WTC11 (cell line): ENCODE measurements at regions of chr11 and their contacts with region 1.

Region 1: DNA sequence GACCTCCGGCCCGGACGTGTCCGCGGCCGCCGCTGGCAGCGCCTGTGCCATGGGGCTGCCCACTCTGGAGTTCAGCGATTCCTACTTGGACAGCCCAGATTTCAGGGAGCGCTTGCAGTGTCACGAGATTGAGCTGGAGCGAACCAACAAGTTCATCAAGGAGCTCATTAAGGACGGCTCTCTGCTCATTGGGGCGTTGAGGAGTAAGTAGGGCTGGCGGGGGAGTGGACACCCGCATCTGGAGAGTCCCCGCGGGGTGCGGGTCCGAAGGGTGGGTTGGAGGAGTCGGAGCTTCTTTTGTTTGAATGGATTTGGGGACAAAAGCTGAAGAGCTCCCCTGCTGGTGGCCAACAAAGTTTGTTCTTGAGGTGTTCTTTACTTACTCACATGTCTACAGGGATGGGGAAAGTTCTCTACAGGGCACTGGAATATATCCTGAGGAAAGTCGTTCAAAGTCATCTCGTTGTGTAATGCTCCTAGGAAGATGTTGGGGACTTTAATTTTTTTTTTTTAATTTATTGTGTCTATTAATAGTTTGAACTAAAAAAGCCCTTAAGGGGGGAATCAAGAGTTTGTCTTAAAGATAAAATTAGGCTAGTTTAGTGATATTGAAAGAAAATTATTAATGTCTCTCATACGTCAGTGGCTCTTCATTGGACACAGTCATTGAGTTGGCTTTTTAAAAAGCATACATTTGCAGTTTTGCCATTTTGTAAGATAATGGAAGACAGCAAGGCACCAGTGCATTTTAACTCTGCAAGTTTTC is 725 bp downstream of the ARHGAP42 start:
- DNase-seq: peak; percentile 72
- ATAC-seq: peak; percentile 58
- H3K4me3 Mint-ChIP-seq: peak overlapping the region; percentile 97
- H3K27ac Mint-ChIP-seq: peak overlapping the region; percentile 97
- H3K4me1 Mint-ChIP-seq: peaks cover 62% of the 10 kb centered on the region
- H3K27me3 Mint-ChIP-seq: no peaks in the 10 kb centered on the region
- CTCF ChIP-seq: peak; percentile 44

Region 2: DNA sequence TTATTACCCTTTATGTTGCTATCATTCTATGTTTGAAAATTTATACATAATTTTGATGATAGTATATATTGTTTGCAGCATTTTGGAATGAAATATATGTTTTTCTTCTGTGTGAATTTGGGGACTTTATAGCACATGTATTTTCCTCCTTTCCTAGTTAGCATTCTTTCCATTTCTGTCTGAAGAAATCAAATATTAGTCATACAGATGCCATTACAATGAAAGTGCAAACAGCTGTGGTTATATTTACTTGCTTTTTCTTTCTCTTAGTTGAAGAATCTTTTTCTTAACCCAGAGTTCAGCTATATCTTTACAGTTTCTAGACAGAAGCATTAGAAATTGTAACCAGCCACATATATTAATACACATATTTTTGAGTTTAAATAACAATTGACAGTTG is 753.8 kb before region 1 on chr11:
- CTCF ChIA-PET with region 1: no interaction called
- POLR2A ChIA-PET with region 1: no interaction called
- DNase-seq: no peak
- ATAC-seq: no peak
- H3K4me3 Mint-ChIP-seq: no peak overlapping the region
- H3K27ac Mint-ChIP-seq: no peak overlapping the region
- H3K4me1 Mint-ChIP-seq: no peaks in the 10 kb centered on the region
- H3K27me3 Mint-ChIP-seq: peaks cover 9% of the 10 kb centered on the region
- CTCF ChIP-seq: no peak

Region 3: GRCh38 chr11:100673063-100673462 is 14.8 kb before region 1 on chr11:
- CTCF ChIA-PET with region 1: no interaction called
- POLR2A ChIA-PET with region 1: no interaction called
- DNase-seq: no peak
- ATAC-seq: no peak
- H3K4me3 Mint-ChIP-seq: no peak overlapping the region
- H3K27ac Mint-ChIP-seq: no peak overlapping the region
- H3K4me1 Mint-ChIP-seq: peaks cover 23% of the 10 kb centered on the region
- H3K27me3 Mint-ChIP-seq: no peaks in the 10 kb centered on the region
- CTCF ChIP-seq: no peak

Region 4: DNA sequence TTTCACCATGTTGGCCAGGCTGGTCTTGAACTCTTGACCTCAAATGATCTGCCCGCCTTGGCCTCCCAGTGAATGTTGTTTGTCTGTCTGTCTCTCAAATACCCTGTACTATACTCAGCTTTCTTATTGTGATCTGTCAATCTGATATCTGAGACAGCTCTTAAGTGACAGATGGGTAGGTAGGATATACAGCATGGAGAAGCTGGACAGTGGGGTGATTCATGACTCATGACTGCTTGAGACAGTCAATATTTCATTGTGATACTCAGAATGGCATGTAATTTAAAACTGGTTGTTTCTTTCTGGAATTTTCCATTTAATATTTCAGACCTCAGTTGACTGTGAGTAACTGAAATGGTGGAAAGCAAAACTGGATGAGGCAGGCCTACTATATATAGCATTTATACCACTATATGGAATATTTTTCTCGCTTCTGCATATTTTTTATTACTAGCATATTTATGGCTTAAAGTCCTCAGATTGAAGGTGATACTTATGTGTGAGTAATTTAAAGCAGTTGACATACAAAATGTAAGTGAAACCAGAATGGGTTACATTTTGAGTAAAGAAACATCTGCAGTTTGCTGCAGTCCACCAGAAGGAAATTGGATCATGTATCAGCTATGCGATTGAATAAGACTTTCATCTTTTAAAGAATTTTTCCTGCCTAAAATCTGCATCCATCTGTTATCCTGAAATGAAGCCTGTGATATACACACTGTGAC is 21.6 kb after region 1 on chr11:
- CTCF ChIA-PET with region 1: interaction called, 27 read pairs
- POLR2A ChIA-PET with region 1: interaction called, 3 read pairs
- DNase-seq: no peak
- ATAC-seq: no peak
- H3K4me3 Mint-ChIP-seq: no peak overlapping the region
- H3K27ac Mint-ChIP-seq: peak overlapping the region; percentile 19; the same call in 1 of the 2 replicates
- H3K4me1 Mint-ChIP-seq: peaks cover 29% of the 10 kb centered on the region
- H3K27me3 Mint-ChIP-seq: no peaks in the 10 kb centered on the region
- CTCF ChIP-seq: no peak

Region 5: GRCh38 chr11:100719809-100720221 is 32.0 kb after region 1 on chr11:
- CTCF ChIA-PET with region 1: interaction called, 15 read pairs
- POLR2A ChIA-PET with region 1: interaction called, 5 read pairs
- DNase-seq: peak; percentile 32
- ATAC-seq: peak; percentile 86
- H3K4me3 Mint-ChIP-seq: peak overlapping the region; percentile 20
- H3K27ac Mint-ChIP-seq: peak overlapping the region; percentile 98
- H3K4me1 Mint-ChIP-seq: peaks cover 77% of the 10 kb centered on the region
- H3K27me3 Mint-ChIP-seq: no peaks in the 10 kb centered on the region
- CTCF ChIP-seq: no peak

Region 6: DNA sequence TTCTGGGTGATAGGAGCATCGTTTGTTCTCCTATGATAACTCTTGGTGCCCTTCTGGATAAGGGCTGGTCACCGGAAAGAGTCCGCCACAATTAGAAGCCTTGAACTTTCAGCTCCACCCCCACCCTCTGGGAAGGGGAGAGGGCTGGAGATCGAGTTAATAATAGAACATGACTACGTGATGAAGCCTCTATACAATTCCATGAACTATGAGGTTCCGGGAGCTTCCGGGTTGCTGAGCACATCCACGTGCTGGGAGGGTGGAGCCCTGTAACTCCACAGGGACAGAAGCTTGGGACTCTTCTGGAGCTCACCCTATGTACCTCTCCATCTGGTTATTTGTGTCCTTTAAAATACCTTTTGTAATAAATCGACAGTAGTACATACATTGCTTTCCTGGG is 39.6 kb after region 1 on chr11:
- CTCF ChIA-PET with region 1: interaction called, 15 read pairs
- POLR2A ChIA-PET with region 1: interaction called, 3 read pairs
- DNase-seq: no peak
- ATAC-seq: no peak
- H3K4me3 Mint-ChIP-seq: no peak overlapping the region; the same call in 1 of the 2 replicates
- H3K27ac Mint-ChIP-seq: peak overlapping the region; percentile 72
- H3K4me1 Mint-ChIP-seq: peaks cover 70% of the 10 kb centered on the region
- H3K27me3 Mint-ChIP-seq: no peaks in the 10 kb centered on the region
- CTCF ChIP-seq: no peak